HepG2 (cell line): ENCODE measurements at regions of chr22 and their contacts with region 1.

Region 1: DNA sequence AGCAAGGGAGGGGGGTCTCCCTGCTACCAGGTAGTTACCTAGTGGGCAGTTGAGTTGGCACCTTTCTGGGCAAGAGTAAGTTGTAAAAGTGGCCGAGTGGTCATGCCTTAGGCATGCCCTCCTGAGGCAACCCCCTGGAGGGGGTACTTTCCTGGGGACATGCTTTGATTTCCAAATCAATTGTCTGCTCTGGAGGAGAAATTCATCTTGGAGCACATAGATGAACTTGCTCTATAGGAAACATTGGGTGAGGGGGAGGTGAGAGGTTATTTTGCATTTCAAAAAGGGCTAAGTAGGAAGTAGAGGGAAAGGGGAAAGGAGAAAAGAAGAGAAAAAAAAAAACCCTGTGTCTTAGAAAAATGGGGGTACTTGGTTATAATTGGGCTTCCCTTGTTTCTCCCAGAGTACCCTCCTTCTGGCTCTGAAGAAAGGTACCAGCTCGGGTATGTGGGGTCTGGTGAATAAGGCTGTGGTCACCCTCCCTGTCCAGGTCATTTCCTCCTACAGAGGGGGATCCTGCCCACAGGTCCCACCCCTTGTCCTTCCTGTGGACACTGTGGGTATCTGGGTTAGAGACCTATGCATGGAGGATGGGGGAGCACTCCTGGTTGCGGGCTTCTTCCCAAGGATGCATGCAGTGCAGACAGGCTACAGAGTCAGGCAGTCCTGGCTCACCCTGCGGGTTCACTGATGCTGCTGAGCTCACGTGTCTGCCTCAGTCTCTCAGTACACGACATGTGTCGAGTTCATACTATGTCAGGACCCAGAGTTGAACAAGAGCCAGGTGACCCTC is 193.5 kb downstream of the MYO18B start:
- DNase-seq: no peak
- ATAC-seq: no peak
- H3K4me3 ChIP-seq: no peak overlapping the region
- H3K27ac ChIP-seq: no peak overlapping the region
- H3K4me1 ChIP-seq: no peaks in the 10 kb centered on the region
- H3K27me3 ChIP-seq: peaks cover 0 to 6% of the 10 kb centered on the region in 2 experiments; a peak in 2 of 5 replicates
- CTCF ChIP-seq: no peak
- EP300 ChIP-seq: no peak
- POLR2A ChIP-seq: no peak
- RAD21 ChIP-seq: no peak

Region 2: GRCh38 chr22:25759825-25760231 is 175.6 kb before region 1 on chr22:
- CTCF ChIA-PET with region 1: no interaction called
- POLR2A ChIA-PET with region 1: no interaction called
- in situ Hi-C with region 1: no loop called
- intact Hi-C with region 1: no loop called
- DNase-seq: peak; percentile 83
- ATAC-seq: peak; percentile 37; the same call in 1 of the 3 replicates
- H3K4me3 ChIP-seq: no peak overlapping the region
- H3K27ac ChIP-seq: no peak overlapping the region
- H3K4me1 ChIP-seq: peaks cover 34% of the 10 kb centered on the region
- H3K27me3 ChIP-seq: peaks cover 0 to 1% of the 10 kb centered on the region in 2 experiments; a peak in 1 of 5 replicates
- CTCF ChIP-seq: no peak
- EP300 ChIP-seq: no peak
- POLR2A ChIP-seq: no peak
- RAD21 ChIP-seq: no peak

Region 3: GRCh38 chr22:25966448-25966913 is 31.0 kb after region 1 on chr22:
- CTCF ChIA-PET with region 1: no interaction called
- POLR2A ChIA-PET with region 1: no interaction called
- in situ Hi-C with region 1: no loop called
- intact Hi-C with region 1: no loop called
- DNase-seq: no peak
- ATAC-seq: no peak
- H3K4me3 ChIP-seq: no peak overlapping the region
- H3K27ac ChIP-seq: no peak overlapping the region
- H3K4me1 ChIP-seq: no peaks in the 10 kb centered on the region
- H3K27me3 ChIP-seq: no peaks in the 10 kb centered on the region
- CTCF ChIP-seq: no peak
- EP300 ChIP-seq: no peak
- POLR2A ChIP-seq: no peak
- RAD21 ChIP-seq: no peak

Region 4: DNA sequence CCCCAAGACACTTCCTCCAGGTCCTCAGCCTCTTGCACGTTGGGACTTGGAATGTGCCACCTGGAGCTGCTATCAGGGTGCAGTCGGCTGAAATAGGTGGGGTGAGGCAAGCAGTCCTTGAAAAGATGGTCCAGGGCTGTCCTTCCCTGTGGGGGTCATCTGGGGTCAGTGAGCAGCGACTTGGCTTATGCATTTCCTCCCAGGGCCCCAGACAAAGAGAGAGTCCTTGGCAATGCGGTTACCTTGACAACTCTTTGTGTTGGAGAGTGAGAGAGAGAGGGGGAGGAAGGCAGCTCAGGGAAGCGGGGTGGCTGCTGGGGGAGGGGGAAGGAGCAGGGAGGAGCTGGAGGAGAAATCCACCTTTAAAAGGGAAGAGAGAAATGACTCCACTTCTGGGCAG is 815.8 kb after region 1 on chr22:
- CTCF ChIA-PET with region 1: no interaction called
- POLR2A ChIA-PET with region 1: no interaction called
- in situ Hi-C with region 1: no loop called
- intact Hi-C with region 1: loop called (anchors 5 kb)
- DNase-seq: no peak
- ATAC-seq: no peak
- H3K4me3 ChIP-seq: no peak overlapping the region
- H3K27ac ChIP-seq: no peak overlapping the region
- H3K4me1 ChIP-seq: 0 out of 2 replicates have a peak, but pooled peaks cover under 1% of the 10 kb centered on the region
- H3K27me3 ChIP-seq: peaks cover 0 to 6% of the 10 kb centered on the region in 2 experiments; a peak in 2 of 5 replicates
- CTCF ChIP-seq: no peak
- EP300 ChIP-seq: no peak
- POLR2A ChIP-seq: no peak
- RAD21 ChIP-seq: no peak